BJ (cell line): ENCODE measurements at regions of chrX and their contacts with region 1.

Region 1: DNA sequence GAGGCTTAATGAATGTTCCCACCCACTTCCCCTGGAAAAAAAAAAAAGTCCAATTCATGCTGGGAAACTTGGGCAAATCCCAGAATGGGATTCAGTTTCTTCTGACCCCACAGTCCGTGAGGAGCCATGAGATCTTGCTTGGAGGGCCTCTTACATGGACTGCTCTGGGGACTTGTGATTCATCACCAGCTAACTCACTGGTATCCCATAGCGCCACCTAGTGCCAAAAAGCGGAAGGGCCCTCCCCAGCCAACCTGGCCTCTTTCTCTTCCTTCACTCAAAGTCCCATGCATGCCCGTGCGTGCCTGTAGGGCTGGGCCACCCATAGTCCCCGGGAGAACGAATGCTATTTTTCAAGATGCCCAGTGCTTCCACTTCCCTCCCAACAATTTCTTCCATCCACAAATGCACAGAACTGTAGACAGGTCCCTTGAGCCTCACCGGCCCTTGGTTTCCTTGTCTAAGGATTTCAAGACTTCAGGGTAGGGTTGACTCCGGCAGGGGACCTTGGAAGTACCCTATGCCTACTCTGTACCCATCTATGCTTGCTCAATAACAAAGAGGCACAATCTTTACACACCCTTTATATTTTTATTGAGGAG is 5.1 kb downstream of the RTL5 start:
- DNase-seq: peak; percentile 44
- H3K4me3 ChIP-seq: no peak overlapping the region
- H3K27me3 ChIP-seq: no peaks in the 10 kb centered on the region
- CTCF ChIP-seq: peak; percentile 78

Region 2: DNA sequence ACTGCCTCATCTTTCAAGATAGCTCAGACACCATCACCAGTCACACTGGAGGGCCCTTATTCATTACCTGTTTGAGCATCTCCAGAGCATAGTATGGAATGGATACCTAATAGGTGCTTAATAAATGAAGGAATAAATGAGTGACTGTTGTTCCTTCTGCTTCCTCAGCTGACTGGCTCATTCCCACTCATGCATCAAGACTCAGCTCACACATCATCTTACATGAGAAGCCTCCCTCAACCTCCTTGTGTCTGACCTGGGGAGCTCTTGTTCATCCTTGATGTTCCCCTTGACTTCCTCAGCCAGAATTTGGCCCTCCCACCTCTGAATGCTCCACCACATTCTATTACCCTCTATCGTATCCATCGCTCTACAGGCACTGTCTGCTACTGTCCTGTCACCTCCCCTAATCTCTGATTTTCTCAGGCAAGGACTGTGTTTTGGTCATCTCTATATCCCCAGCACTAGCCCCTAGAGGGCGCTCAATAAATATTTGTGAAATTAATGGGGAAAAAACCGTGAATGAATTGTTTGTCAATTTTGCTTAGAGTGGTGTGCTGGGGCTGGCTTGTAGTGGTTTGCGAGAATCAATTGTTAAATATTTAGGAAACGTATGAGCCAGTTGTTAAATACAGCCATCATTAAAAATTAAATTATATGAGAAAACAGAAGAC is 127.7 kb before region 1 on chrX:
- CTCF ChIA-PET with region 1: interaction called, 17 read pairs
- POLR2A ChIA-PET with region 1: no interaction called
- DNase-seq: no peak
- H3K4me3 ChIP-seq: no peak overlapping the region
- H3K27me3 ChIP-seq: no peaks in the 10 kb centered on the region
- CTCF ChIP-seq: peak; percentile 57

Region 3: GRCh38 chrX:72029483-72030411 is 96.9 kb before region 1 on chrX:
- CTCF ChIA-PET with region 1: interaction called, 17 read pairs
- POLR2A ChIA-PET with region 1: no interaction called
- DNase-seq: peak; percentile 41
- H3K4me3 ChIP-seq: no peak overlapping the region
- H3K27me3 ChIP-seq: no peaks in the 10 kb centered on the region
- CTCF ChIP-seq: no peak